CD8-positive, alpha-beta T cell (primary cell): ENCODE measurements at regions of chr5 and their contacts with region 1.

Region 1: GRCh38 chr5:35876921-35877320 is 20.2 kb downstream of the IL7R start:
- DNase-seq: peak in 1 of 9 experiments; percentile 33
- ATAC-seq: no peak
- H3K4me3 ChIP-seq: no peak overlapping the region
- H3K4me3 Mint-ChIP-seq: peak overlapping the region; percentile 46
- H3K27ac ChIP-seq: peak overlapping the region in 1 of 2 experiments; percentile 23
- H3K27ac Mint-ChIP-seq: peak overlapping the region; percentile 87
- H3K4me1 ChIP-seq: peaks cover 65% of the 10 kb centered on the region
- H3K4me1 Mint-ChIP-seq: peaks cover 87% of the 10 kb centered on the region
- H3K27me3 ChIP-seq: no peaks in the 10 kb centered on the region
- H3K27me3 Mint-ChIP-seq: no peaks in the 10 kb centered on the region
- CTCF ChIP-seq: no peak

Region 2: DNA sequence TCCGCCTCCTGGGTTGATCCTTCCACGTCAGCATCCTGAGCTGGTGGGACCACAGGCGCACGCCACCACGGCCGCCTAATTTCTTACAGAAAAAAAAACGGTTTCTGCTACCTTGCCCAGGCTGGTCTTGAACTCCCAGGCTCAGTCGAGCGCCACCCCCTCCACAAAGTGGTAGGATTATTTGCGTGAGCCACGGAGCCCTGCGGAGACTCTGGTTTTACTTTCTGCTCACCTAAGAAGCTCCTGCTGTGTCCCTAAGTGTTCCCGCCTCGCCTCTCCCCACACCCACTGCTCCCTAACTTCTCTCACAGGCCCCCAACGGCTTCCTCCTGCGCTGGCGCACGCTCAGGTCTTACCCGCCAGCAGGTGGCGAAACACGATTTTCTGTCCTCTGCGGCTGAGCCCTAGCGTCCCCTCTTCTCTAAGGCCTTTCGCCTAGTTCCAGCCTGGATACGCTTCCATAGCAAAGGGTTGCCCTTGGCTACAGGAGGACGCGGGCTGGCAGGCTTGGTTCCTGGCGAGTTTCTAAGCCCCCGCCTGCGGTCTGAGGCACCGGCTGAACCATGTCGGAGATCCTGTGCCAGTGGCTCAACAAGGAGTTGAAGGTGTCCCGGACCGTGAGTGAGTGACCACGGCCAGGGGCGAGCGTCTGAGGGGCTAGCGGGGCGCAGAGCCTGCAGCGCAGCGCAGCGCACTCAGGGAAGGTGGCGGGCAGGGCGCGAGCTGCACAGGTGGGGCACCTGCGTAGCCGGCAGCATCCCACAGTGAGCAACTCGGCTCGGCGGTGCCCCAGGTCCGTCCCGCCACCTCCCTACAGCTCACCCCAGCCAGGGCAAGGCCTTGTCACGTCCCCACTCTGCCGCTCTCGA is 259.3 kb before region 1 on chr5 and contains the start of gene SPEF2:
- CTCF ChIA-PET with region 1: interaction called, 3 read pairs
- POLR2A ChIA-PET with region 1: no interaction called
- intact Hi-C with region 1: loop called in 1 of 2 experiments (anchors 5 kb)
- DNase-seq: peak; percentile 54 to 90 (median 80)
- ATAC-seq: peak; percentile 84
- H3K4me3 ChIP-seq: peak within 1 kb of the TSS; percentile 84 to 88
- H3K4me3 Mint-ChIP-seq: peak within 1 kb of the TSS; percentile 91
- H3K27ac ChIP-seq: peak within 1 kb of the TSS; percentile 60 to 63
- H3K27ac Mint-ChIP-seq: peak within 1 kb of the TSS; percentile 95
- H3K4me1 ChIP-seq: peaks cover 16% of the 10 kb centered on the region
- H3K4me1 Mint-ChIP-seq: peaks cover 31% of the 10 kb centered on the region
- H3K27me3 ChIP-seq: no peaks in the 10 kb centered on the region
- H3K27me3 Mint-ChIP-seq: no peaks in the 10 kb centered on the region
- CTCF ChIP-seq: peak; percentile 78
- total RNA-seq, gene SPEF2: 3.5 to 4.7 TPM

Region 3: GRCh38 chr5:35830587-35830986 is 46.3 kb before region 1 on chr5:
- CTCF ChIA-PET with region 1: no interaction called
- POLR2A ChIA-PET with region 1: interaction called, 10 read pairs
- intact Hi-C with region 1: no loop called
- DNase-seq: peak in 4 of 9 experiments; percentile 22 to 82 (median 72)
- ATAC-seq: peak; percentile 78
- H3K4me3 ChIP-seq: no peak overlapping the region
- H3K4me3 Mint-ChIP-seq: peak overlapping the region; percentile 63
- H3K27ac ChIP-seq: peak overlapping the region; percentile 1 to 43
- H3K27ac Mint-ChIP-seq: peak overlapping the region; percentile 90
- H3K4me1 ChIP-seq: peaks cover 86% of the 10 kb centered on the region
- H3K4me1 Mint-ChIP-seq: peaks cover 91% of the 10 kb centered on the region
- H3K27me3 ChIP-seq: no peaks in the 10 kb centered on the region
- H3K27me3 Mint-ChIP-seq: no peaks in the 10 kb centered on the region
- CTCF ChIP-seq: no peak

Region 4: DNA sequence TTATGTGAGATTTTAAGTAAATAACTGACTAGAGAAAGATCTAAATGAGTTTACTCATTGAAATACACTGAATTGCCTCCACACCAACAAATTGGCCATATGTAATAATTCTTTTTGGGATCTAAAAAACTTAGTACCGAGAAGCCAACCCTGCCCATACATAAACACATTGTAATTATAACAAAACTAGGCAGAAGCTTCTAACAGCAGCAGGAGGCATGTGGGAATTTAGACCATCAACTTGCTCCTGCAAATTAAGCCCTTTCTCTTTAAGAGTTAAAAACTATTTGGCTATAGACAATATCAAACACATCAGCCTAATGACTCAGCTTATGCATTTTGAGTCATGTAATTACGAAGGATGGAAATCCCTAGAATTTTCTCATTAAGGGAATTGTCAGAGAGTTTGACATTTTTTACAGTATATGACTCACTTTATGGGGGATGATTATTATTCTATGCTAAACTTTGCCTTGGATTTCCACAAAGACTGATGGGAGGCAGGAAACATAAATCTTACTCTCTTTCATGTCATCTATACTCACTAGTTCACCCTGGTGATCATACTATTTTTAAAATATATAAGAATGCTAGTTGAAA is 19.2 kb before region 1 on chr5:
- CTCF ChIA-PET with region 1: interaction called, 11 read pairs
- POLR2A ChIA-PET with region 1: interaction called, 75 read pairs
- intact Hi-C with region 1: no loop called
- DNase-seq: peak in 3 of 9 experiments; percentile 8 to 46 (median 28)
- ATAC-seq: no peak
- H3K4me3 ChIP-seq: peak overlapping the region; percentile 66 to 80
- H3K4me3 Mint-ChIP-seq: peak overlapping the region; percentile 92
- H3K27ac ChIP-seq: peak overlapping the region; percentile 94 to 97
- H3K27ac Mint-ChIP-seq: peak overlapping the region; percentile 100
- H3K4me1 ChIP-seq: peaks cover 55% of the 10 kb centered on the region
- H3K4me1 Mint-ChIP-seq: peaks cover 70% of the 10 kb centered on the region
- H3K27me3 ChIP-seq: no peaks in the 10 kb centered on the region
- H3K27me3 Mint-ChIP-seq: no peaks in the 10 kb centered on the region
- CTCF ChIP-seq: no peak

Region 5: GRCh38 chr5:35863159-35863558 is 13.8 kb before region 1 on chr5:
- CTCF ChIA-PET with region 1: interaction called, 11 read pairs
- POLR2A ChIA-PET with region 1: interaction called, 75 read pairs
- intact Hi-C with region 1: loop called in 1 of 2 experiments (anchors 1 kb)
- DNase-seq: peak in 1 of 9 experiments; percentile 22
- ATAC-seq: no peak
- H3K4me3 ChIP-seq: peak overlapping the region; percentile 66 to 80
- H3K4me3 Mint-ChIP-seq: peak overlapping the region; percentile 91
- H3K27ac ChIP-seq: peak overlapping the region; percentile 59 to 97
- H3K27ac Mint-ChIP-seq: peak overlapping the region; percentile 96
- H3K4me1 ChIP-seq: peaks cover 52% of the 10 kb centered on the region
- H3K4me1 Mint-ChIP-seq: peaks cover 76% of the 10 kb centered on the region
- H3K27me3 ChIP-seq: no peaks in the 10 kb centered on the region
- H3K27me3 Mint-ChIP-seq: no peaks in the 10 kb centered on the region
- CTCF ChIP-seq: no peak